Gastrocnemius medialis (tissue), 4 donors: ENCODE measurements at regions of chr16 and their contacts with region 1.

Region 1: DNA sequence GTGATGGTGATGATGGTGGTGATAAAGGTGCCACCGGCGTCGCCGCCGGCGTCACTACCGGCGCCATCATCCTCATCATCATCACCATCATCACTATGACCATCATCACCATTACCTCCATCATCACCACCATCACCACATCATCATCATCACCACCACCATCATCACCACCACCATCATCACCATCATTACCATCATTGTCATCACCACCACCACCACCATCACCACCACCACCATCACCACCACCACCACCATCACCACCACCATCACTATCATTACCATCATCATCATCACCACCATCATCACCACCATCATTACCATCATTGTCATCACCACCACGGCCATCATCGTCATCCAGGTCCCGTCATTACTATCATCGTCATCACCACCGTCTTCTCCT is 179.7 kb downstream of the NPIPB11 start:
- DNase-seq: no peak
- ATAC-seq: no peak
- H3K4me3 ChIP-seq: no peak overlapping the region
- H3K27ac ChIP-seq: no peak overlapping the region
- H3K4me1 ChIP-seq: no peaks in the 10 kb centered on the region
- H3K27me3 ChIP-seq: no peaks in the 10 kb centered on the region
- CTCF ChIP-seq: no peak
- POLR2A ChIP-seq: no peak

Region 2: GRCh38 chr16:28524681-28525171 is 702.1 kb before region 1 on chr16:
- in situ Hi-C with region 1: no loop called
- intact Hi-C with region 1: no loop called
- DNase-seq: no peak
- ATAC-seq: peak; percentile 19 to 31
- H3K4me3 ChIP-seq: no peak overlapping the region
- H3K27ac ChIP-seq: no peak overlapping the region
- H3K4me1 ChIP-seq: peaks cover 0 to 4% of the 10 kb centered on the region in 2 donors
- H3K27me3 ChIP-seq: no peaks in the 10 kb centered on the region
- CTCF ChIP-seq: no peak
- POLR2A ChIP-seq: no peak

Region 3: GRCh38 chr16:29007730-29008593 is 218.8 kb before region 1 on chr16:
- in situ Hi-C with region 1: no loop called
- intact Hi-C with region 1: no loop called
- DNase-seq: no peak
- ATAC-seq: no peak
- H3K4me3 ChIP-seq: no peak overlapping the region
- H3K27ac ChIP-seq: no peak overlapping the region
- H3K4me1 ChIP-seq: no peaks in the 10 kb centered on the region
- H3K27me3 ChIP-seq: no peaks in the 10 kb centered on the region
- CTCF ChIP-seq: no peak
- POLR2A ChIP-seq: no peak

Region 4: GRCh38 chr16:29237971-29238370 is 11.2 kb after region 1 on chr16:
- in situ Hi-C with region 1: no loop called
- intact Hi-C with region 1: no loop called
- DNase-seq: no peak
- ATAC-seq: no peak
- H3K4me3 ChIP-seq: no peak overlapping the region
- H3K27ac ChIP-seq: no peak overlapping the region
- H3K4me1 ChIP-seq: no peaks in the 10 kb centered on the region
- H3K27me3 ChIP-seq: no peaks in the 10 kb centered on the region
- CTCF ChIP-seq: no peak
- POLR2A ChIP-seq: no peak

Region 5: GRCh38 chr16:29290631-29291247 is 64.0 kb after region 1 on chr16:
- in situ Hi-C with region 1: no loop called
- intact Hi-C with region 1: loop called (anchors 5 kb)
- DNase-seq: peak; percentile 99
- ATAC-seq: peak; percentile 86 to 91
- H3K4me3 ChIP-seq: peak overlapping the region in 2 of 4 donors; percentile 21 to 30
- H3K27ac ChIP-seq: peak overlapping the region; percentile 62 to 68 (median 62)
- H3K4me1 ChIP-seq: peaks cover 22 to 26% of the 10 kb centered on the region in 2 donors
- H3K27me3 ChIP-seq: no peaks in the 10 kb centered on the region
- CTCF ChIP-seq: no peak
- POLR2A ChIP-seq: peak in 1 of 2 donors; percentile 39

Region 6: DNA sequence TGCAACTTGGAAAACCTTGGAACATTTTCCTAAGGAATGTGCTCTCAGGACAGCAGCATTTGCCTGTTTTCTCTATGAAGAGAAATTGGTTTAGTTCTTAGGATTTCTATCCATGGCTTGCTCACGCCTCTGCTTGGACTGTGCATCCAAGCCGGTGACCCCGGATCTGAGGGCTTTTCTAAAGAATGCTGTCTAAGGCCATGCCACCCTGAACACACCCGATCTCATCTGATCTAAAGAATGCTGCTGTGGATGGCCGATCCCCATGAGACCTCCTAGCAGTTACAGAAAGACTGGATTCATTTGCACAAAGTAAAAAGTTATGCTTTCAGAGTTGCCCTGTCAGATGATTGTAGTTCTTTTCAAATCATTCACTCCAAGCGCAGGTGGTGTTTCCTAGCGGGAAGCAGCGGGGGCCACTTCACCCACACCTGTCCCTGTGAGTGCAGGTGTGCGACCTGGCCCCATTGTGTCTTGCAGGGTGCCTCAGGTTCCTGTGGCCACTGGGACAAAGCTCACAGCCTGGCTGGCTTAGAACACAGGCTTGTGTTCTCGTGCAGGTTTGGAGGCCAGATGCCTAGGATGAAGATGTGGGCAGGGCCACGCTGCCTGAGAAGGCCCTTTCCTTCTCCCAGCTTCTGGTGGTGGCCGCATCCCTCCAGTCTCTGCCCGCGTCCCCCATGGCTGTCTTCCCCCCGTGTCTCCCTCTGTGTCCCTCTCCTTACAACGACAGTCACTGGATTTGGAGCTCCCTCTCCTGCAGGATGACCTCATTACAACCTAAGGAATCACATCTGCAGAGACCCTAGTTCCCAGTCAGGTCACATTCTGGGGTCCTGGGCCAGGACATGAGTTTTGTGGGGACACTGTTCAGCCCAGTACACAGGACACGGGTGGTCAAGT is 89.1 kb after region 1 on chr16:
- in situ Hi-C with region 1: no loop called
- intact Hi-C with region 1: no loop called
- DNase-seq: no peak
- ATAC-seq: peak; percentile 23 to 55
- H3K4me3 ChIP-seq: no peak overlapping the region
- H3K27ac ChIP-seq: no peak overlapping the region
- H3K4me1 ChIP-seq: peaks cover 0 to 3% of the 10 kb centered on the region in 2 donors
- H3K27me3 ChIP-seq: no peaks in the 10 kb centered on the region
- CTCF ChIP-seq: peak in 2 of 5 experiments; percentile 28 to 36
- POLR2A ChIP-seq: no peak